ENCODE measurements at regions of chr17 and their contacts with region 1.

Region 1: DNA sequence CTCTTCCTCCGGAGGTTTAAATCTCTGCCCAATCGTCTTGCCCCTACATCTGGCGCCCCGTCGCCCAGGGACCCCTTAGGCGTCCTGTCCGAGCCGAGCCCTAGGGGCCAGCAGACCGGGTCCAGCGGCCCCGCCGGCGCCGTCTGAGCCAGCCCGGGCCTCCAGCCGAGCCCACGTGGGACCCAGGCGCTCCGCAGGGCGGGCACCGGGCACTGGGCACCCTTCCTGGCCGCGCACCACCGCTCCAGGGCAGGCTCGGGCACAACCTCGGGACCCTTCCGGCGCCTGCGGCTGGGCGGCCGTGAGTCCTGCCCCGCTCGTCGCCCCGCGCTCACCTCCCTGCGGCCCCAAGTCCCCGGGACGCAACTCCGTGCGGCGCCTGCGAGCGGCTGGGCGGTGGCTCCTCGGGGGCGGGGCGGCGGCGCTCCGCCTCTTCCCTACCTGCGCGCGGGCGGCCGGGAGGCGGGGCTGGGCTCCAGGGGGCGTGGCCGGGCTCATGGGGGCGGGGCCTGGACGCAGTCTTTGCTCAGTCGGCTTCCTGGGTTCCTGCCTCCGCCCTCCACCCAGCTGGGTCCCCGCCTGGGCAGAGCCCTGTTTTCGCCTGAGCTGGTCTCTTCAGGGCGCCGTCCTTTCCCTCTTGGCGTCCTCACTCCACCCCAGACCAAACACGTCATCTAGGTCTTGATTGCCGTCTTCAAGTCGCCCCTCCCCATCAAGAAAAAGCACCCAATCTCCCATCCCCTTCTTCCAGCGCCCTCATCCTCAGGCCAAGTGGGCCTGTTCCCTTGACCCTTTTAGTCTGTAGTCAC is at the start of gene RHBDF2:
- ATAC-seq: peak; percentile 58 to 86 (median 71)
- H3K4me3 ChIP-seq: peak within 1 kb of the TSS; percentile 15 to 38 (median 31)
- H3K27ac ChIP-seq: no peak within 1 kb of the TSS
- H3K4me1 ChIP-seq: peaks cover 26 to 33% of the 10 kb centered on the region in 2 donors
- total RNA-seq, gene RHBDF2: 0.78 to 17.3 (median 2.8) TPM

Region 2: GRCh38 chr17:76307299-76307965 is 193.8 kb before region 1 on chr17:
- in situ Hi-C with region 1: loop called in 3 of 9 experiments (anchors 10 to 25 kb)
- ATAC-seq: peak in 2 of 8 experiments; percentile 7 to 9
- H3K4me3 ChIP-seq: no peak overlapping the region
- H3K27ac ChIP-seq: no peak overlapping the region
- H3K4me1 ChIP-seq: peaks cover 2 to 6% of the 10 kb centered on the region in 2 donors

Region 3: DNA sequence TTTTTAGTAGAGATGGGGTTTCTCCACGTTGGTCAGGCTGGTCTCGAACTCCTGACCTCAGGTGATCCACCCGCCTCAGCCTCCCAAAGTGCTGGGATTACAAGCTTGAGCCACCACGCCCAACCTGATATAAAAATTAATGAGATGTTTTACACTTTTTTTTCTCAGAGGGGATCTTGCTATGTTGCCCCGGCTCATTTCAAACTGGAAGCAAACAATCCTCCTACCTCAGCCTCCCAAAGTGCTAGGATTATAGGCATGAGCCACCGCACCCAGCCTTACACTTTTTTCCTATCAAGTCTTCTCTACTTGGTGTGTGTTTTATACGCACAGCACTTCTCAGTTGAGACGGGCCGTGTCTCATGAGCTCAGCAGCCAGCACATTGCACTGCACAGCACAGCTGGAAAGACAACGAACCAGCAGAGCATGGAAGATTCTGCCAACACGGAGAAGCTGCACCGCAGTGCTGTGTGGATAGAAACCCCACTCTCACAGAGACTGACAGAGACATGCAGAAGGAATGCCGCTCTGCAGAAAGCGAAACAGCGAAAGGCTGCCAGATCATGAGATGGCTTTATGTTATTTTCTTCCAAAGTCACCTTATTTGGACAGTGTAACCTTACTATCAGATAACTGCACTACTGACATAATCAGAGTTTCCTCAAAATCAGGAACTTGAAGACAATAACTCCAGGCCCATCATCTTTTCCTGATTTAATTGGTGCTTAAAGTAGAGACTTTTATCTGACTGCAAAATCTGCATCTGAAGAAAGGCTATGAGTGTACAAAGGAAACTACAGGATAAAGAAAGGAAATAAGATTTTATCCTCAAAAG is 186.6 kb before region 1 on chr17:
- in situ Hi-C with region 1: loop called in 3 of 9 experiments (anchors 10 to 25 kb)
- ATAC-seq: no peak
- H3K4me3 ChIP-seq: no peak overlapping the region
- H3K27ac ChIP-seq: no peak overlapping the region
- H3K4me1 ChIP-seq: peaks cover 12 to 16% of the 10 kb centered on the region in 2 donors

Region 4: GRCh38 chr17:76567634-76568432 is 66.6 kb after region 1 on chr17:
- in situ Hi-C with region 1: no loop called
- ATAC-seq: peak in 4 of 8 experiments; percentile 30 to 59 (median 46)
- H3K4me3 ChIP-seq: no peak overlapping the region
- H3K27ac ChIP-seq: no peak overlapping the region
- H3K4me1 ChIP-seq: peaks cover 0 to 15% of the 10 kb centered on the region in 2 donors

Region 5: GRCh38 chr17:76852843-76853242 is 351.6 kb after region 1 on chr17:
- in situ Hi-C with region 1: no loop called
- ATAC-seq: no peak
- H3K4me3 ChIP-seq: no peak overlapping the region
- H3K27ac ChIP-seq: no peak overlapping the region
- H3K4me1 ChIP-seq: peaks cover 0 to 5% of the 10 kb centered on the region in 2 donors

Region 6: DNA sequence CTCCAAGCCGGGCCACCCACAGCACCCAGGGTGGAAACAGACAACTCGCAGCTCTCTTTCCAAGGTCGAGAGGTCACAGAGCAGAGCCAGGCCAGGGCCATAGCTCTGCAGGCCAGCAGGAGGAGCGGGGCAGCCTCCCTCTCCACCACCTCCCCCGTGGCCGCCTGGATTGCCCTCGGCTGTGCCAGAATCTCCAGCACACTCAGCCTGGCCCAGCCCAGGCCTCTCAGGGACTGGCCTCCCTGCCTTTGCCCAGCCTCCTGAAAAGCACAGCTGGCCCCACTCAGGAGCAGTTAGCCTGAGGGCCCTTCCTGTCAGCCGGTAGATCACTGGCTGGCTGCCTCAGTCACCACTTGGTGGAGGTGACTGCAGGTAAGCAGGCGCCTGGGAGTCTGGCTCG is 553.7 kb after region 1 on chr17:
- in situ Hi-C with region 1: loop called in 1 of 9 experiments (anchors 25 kb)
- ATAC-seq: peak in 3 of 8 experiments; percentile 7 to 57 (median 18)
- H3K4me3 ChIP-seq: no peak overlapping the region
- H3K27ac ChIP-seq: no peak overlapping the region
- H3K4me1 ChIP-seq: peaks cover 10 to 20% of the 10 kb centered on the region in 2 donors

Region 7: GRCh38 chr17:78409191-78409928 is 1908.1 kb after region 1 on chr17:
- in situ Hi-C with region 1: no loop called
- ATAC-seq: peak in 3 of 8 experiments; percentile 45 to 89 (median 57)
- H3K4me3 ChIP-seq: no peak overlapping the region
- H3K27ac ChIP-seq: no peak overlapping the region
- H3K4me1 ChIP-seq: peaks cover 0 to 5% of the 10 kb centered on the region in 2 donors

Measured in motor neuron (in vitro differentiated cells).